HepG2 (cell line): ENCODE measurements at regions of chr7 and their contacts with region 1.

Region 1: DNA sequence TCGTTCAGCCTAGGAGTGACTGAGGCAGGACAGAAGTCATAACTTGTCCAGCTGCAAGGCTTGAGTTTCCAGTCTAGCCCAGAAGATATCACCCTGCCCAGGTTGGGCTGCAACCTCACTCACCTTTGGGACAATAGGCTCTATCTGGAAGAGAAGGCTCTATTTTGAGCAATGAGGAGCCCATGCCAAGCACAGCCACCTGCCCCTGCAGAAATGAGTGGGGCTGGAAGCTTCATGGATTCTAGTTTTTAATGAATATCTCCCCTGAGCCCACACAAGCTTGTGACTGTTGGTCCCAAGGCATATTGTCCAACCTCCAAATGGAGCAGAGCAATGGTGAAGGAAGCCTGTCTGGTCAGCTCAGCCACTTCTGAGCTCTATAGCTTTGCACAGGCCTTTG is 42.7 kb downstream of the ZNF273 start:
- DNase-seq: no peak
- ATAC-seq: peak; percentile 14
- H3K4me3 ChIP-seq: no peak overlapping the region
- H3K27ac ChIP-seq: no peak overlapping the region
- H3K4me1 ChIP-seq: peaks cover 33% of the 10 kb centered on the region
- H3K27me3 ChIP-seq: peaks cover 0 to 2% of the 10 kb centered on the region in 2 experiments; a peak in 1 of 5 replicates
- CTCF ChIP-seq: no peak
- EP300 ChIP-seq: no peak
- POLR2A ChIP-seq: no peak
- RAD21 ChIP-seq: no peak

Region 2: DNA sequence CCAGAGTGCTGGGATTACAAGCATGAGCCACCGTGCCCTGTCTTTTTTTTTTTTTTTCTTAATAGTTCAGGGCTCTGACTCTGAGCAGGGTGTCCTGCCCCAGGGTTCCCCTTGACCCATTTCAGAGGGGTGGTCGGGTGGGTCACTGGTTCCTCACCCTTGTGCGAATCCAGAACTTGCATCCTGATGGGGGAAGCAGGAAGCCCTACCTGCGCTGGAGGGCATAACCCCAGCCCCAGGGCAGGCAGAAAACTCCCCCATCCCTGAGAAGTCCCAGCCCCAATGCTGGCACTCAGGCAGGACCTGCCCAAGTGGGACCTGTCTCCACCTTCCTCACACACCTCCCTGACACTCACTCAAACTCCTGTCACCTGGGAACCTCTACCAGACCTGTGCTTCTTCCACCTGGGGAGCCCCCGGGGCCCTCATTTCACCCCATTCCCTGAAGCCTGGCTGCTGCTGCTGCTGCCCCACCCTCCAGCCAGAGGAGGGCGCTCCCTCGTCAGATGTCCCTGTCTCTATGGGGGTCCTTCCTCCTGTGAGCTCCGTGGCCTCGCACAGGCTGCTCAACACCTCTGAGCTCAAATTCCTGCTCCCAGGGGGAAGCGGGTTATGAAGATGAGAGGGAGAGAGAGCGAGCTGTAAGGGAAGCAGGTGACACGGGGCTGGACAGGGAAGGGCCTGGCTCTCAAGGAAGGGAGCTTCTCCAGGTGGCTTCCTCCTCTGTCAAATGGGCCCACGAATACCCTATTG is 57.8 kb before region 1 on chr7:
- CTCF ChIA-PET with region 1: no interaction called
- POLR2A ChIA-PET with region 1: no interaction called
- in situ Hi-C with region 1: no loop called
- intact Hi-C with region 1: loop called (anchors 2 kb)
- DNase-seq: peak; percentile 27
- ATAC-seq: peak; percentile 72
- H3K4me3 ChIP-seq: peak overlapping the region; percentile 54 to 80 (median 76)
- H3K27ac ChIP-seq: no peak overlapping the region
- H3K4me1 ChIP-seq: peaks cover 33% of the 10 kb centered on the region
- H3K27me3 ChIP-seq: peaks cover 16 to 70% of the 10 kb centered on the region in 2 experiments; a peak in 3 of 5 replicates
- CTCF ChIP-seq: peak; percentile 91
- EP300 ChIP-seq: no peak
- POLR2A ChIP-seq: no peak
- RAD21 ChIP-seq: peak; percentile 56